Calu3 (cell line): ENCODE measurements at regions of chr17 and their contacts with region 1.

Region 1: DNA sequence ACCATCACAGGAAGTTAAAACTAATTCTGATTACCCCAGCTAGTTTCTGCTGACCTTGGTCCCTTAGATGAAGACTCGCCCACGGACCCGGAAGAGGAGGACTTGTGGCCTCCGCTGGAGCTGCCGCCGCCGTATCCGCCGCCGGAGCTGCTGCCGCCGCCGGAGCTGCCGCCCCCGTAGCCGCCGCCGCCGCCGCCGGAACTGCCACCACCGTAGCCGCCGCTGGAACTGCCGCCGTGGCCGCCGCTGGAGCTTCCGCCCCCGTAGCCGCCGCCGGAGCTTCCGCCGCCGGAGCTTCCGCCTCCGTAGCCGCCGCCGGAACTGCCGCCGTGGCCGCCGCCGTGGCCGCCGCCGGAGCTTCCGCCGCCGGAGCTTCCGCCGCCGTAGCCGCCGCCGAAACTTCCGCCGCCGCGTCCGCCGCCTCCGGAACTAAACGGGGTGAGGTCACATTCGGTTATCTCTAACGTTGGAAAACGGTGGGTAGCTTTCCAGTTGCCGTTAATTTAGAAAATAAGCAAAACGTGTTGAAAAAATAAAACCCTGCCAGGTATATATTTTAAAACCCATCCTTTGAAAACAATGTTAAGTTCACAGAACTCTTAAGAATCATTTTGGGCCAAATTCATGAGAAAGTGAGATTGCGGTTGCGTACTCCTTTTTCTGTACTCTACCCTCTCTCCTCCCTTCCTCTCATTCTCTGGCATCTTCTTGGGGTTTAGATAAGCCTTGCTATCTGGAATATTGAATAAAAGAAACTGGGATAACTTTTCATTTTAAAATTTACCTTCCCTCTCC is 3.5 kb downstream of the KRT10 start:
- DNase-seq: peak; percentile 100
- H3K4me3 Mint-ChIP-seq: peak overlapping the region; percentile 80
- H3K27ac Mint-ChIP-seq: peak overlapping the region; percentile 92
- H3K4me1 Mint-ChIP-seq: peaks cover 31% of the 10 kb centered on the region
- H3K27me3 Mint-ChIP-seq: no peaks in the 10 kb centered on the region
- CTCF ChIP-seq: no peak

Region 2: DNA sequence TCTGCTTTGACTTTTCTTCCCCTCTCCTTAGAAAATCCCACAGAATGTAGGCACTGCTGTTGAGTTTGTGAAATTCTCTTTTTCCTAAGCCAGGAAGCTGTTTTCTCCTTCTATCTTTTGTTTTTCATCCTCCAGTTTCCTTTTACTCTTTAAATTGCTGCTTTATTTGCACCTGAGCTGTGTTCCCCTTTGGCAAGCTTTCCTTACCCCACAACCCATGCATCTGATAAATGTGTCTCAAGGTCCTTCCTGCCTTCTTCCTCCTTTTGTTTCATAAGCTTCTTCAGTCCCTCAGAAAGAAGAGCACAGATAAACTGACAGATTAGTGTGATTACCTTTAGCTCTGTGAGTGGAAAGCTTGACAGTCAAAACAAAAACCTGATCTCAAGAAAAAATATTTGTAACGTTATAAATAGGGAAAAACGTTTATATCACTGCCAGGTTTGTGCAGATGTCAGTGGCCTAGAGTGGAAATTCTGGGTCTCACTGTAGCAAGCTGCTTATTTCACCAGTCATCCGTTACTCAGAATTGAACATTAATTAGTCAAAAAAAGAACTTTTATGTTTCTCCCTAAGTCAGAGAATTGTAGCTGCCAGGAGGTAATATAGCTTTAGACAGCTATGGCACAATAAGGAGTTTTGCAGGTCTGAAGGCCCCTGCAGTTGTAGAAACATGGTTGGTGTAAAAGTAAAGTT is 924.1 kb before region 1 on chr17:
- CTCF ChIA-PET with region 1: interaction called, 3 read pairs
- intact Hi-C with region 1: loop called (anchors 2 kb)
- DNase-seq: peak; percentile 63
- H3K4me3 Mint-ChIP-seq: no peak overlapping the region
- H3K27ac Mint-ChIP-seq: no peak overlapping the region
- H3K4me1 Mint-ChIP-seq: peaks cover 23% of the 10 kb centered on the region
- H3K27me3 Mint-ChIP-seq: peaks cover 15% of the 10 kb centered on the region
- CTCF ChIP-seq: no peak

Region 3: DNA sequence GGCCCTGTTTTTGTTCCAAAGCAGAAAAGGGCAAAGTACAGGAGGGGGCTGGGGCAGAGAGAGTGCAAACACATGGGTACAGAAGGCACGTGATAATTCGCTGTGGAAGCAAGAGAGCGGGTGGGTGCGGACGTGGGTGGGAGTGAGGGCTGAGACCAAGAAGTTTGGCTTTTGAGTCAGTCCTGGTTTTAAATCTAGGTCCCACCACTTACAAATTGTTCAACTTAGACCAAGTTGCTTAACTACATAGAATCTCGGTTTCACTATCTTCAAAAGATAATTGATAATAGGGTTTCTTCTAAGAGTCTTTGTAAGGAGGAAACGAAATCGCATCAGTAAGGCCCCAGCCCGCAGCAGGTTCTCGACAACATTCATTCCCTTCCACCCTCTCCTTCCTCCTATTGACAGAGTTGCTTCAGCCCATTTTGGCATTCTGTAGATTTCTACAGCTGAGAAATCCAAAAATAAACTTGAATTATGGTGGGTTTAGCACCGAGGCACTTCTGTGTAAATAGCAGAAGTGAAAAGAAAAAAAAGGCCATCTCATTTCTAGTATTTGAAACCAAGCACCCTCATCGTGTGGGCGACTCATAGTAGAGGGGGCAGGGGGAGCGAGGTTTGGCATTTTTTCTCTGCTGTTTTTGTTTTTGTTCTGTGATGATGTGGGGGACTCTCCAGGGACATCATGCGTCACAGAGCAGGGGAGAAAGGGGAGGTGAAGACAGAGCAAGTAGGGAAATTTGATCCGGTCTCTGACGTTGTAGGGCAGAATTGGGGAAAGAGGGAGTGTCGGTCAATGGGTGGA is 220.1 kb before region 1 on chr17:
- CTCF ChIA-PET with region 1: no interaction called
- intact Hi-C with region 1: no loop called
- DNase-seq: no peak
- H3K4me3 Mint-ChIP-seq: no peak overlapping the region
- H3K27ac Mint-ChIP-seq: no peak overlapping the region
- H3K4me1 Mint-ChIP-seq: peaks cover 10% of the 10 kb centered on the region
- H3K27me3 Mint-ChIP-seq: peaks cover 37% of the 10 kb centered on the region
- CTCF ChIP-seq: no peak

Region 4: GRCh38 chr17:40664582-40665333 is 154.2 kb before region 1 on chr17 and contains the start of gene KRT222:
- CTCF ChIA-PET with region 1: interaction called, 28 read pairs
- intact Hi-C with region 1: no loop called
- DNase-seq: no peak
- H3K4me3 Mint-ChIP-seq: peak within 1 kb of the TSS; percentile 46
- H3K27ac Mint-ChIP-seq: no peak within 1 kb of the TSS
- H3K4me1 Mint-ChIP-seq: peaks cover 19% of the 10 kb centered on the region
- H3K27me3 Mint-ChIP-seq: peaks cover 86% of the 10 kb centered on the region
- CTCF ChIP-seq: no peak
- total RNA-seq, gene KRT222: not detected in 2 replicates

Region 5: GRCh38 chr17:40841246-40841645 is 22.3 kb after region 1 on chr17:
- CTCF ChIA-PET with region 1: interaction called, 16 read pairs
- intact Hi-C with region 1: no loop called
- DNase-seq: no peak
- H3K4me3 Mint-ChIP-seq: no peak overlapping the region
- H3K27ac Mint-ChIP-seq: no peak overlapping the region
- H3K4me1 Mint-ChIP-seq: peaks cover 16% of the 10 kb centered on the region
- H3K27me3 Mint-ChIP-seq: no peaks in the 10 kb centered on the region
- CTCF ChIP-seq: no peak

Region 6: GRCh38 chr17:40903129-40904065 is 84.5 kb after region 1 on chr17:
- CTCF ChIA-PET with region 1: interaction called, 11 read pairs
- intact Hi-C with region 1: no loop called
- DNase-seq: peak; percentile 82
- H3K4me3 Mint-ChIP-seq: peak overlapping the region; percentile 51
- H3K27ac Mint-ChIP-seq: peak overlapping the region; percentile 92
- H3K4me1 Mint-ChIP-seq: peaks cover 86% of the 10 kb centered on the region
- H3K27me3 Mint-ChIP-seq: no peaks in the 10 kb centered on the region
- CTCF ChIP-seq: no peak

Region 7: GRCh38 chr17:41008805-41009204 is 189.9 kb after region 1 on chr17 and contains the start of gene KRTAP3-1:
- CTCF ChIA-PET with region 1: no interaction called
- intact Hi-C with region 1: no loop called
- DNase-seq: no peak
- H3K4me3 Mint-ChIP-seq: no peak within 1 kb of the TSS
- H3K27ac Mint-ChIP-seq: no peak within 1 kb of the TSS
- H3K4me1 Mint-ChIP-seq: peaks cover 50% of the 10 kb centered on the region
- H3K27me3 Mint-ChIP-seq: no peaks in the 10 kb centered on the region
- CTCF ChIP-seq: no peak
- total RNA-seq, gene KRTAP3-1: not detected in 2 replicates

Region 8: DNA sequence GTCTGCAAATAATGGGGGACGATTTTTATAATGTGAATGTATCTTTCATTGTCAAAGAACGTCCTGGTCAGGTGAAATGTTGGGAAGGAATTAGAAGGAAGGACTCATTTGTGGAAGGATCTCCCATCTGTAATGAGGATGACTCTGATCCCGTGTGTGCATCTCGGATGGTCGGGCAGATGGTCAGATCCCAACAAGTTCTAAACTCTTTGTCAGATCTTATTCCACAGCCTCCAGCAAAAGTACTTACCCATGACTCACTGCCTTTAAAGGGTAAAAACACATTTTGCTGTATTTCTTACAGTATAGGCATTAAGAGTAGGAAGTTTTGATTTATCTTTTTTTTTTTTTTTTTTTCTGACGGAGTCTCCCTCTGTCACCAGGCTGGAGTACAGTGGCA is 279.5 kb after region 1 on chr17:
- CTCF ChIA-PET with region 1: no interaction called
- intact Hi-C with region 1: no loop called
- DNase-seq: no peak
- H3K4me3 Mint-ChIP-seq: no peak overlapping the region
- H3K27ac Mint-ChIP-seq: no peak overlapping the region
- H3K4me1 Mint-ChIP-seq: peaks cover 54% of the 10 kb centered on the region
- H3K27me3 Mint-ChIP-seq: no peaks in the 10 kb centered on the region
- CTCF ChIP-seq: no peak